ENCODE measurements at regions of chr6 and their contacts with region 1.

Region 1: DNA sequence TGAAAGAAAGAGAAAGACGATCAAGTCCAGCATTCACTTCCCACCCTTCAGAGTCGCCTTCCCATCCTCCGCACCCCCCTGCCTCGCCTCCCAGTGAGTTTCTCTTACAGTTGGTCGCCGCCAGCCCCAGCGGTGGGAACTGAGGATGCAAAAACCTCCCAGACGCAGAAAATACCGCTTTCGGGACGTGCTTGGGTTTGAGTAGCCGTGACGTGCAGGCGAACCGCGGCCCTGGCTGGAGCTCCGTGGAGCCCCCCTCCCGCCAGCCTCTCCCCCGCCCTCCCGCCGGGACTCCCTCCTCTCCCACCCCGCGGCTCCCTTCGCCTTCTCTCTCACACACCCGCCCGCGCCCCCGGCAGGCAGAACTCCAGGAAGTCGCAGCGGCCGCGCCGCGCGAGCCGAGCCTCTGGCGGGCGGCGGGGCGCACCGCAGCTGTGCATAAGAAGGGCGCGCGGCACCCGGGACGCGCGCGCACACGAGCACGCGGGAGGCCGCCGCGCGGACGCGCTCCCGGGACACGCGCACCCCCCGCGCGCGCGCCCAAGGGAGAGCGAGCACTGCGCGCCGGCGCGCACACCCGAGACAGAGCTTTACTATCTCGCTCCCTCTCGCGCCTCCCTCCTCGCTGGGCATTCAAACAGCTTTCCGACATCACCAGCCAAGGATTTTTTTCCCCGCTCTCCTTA is at the start of gene ADGRB3:
- DNase-seq: peak; percentile 95
- H3K4me3 ChIP-seq: peak within 1 kb of the TSS; percentile 88
- H3K27ac ChIP-seq: peak within 1 kb of the TSS; percentile 84
- H3K4me1 ChIP-seq: peaks cover 39% of the 10 kb centered on the region
- H3K27me3 ChIP-seq: no peaks in the 10 kb centered on the region
- CTCF ChIP-seq: no peak
- total RNA-seq, gene ADGRB3: 7.7 and 8.1 TPM in 2 replicates

Region 2: GRCh38 chr6:68238097-68238601 is 396.7 kb before region 1 on chr6:
- CTCF ChIA-PET with region 1: no interaction called
- POLR2A ChIA-PET with region 1: no interaction called
- intact Hi-C with region 1: loop called (anchors 10 kb)
- DNase-seq: peak; percentile 71
- H3K4me3 ChIP-seq: no peak overlapping the region
- H3K27ac ChIP-seq: peak overlapping the region; percentile 21
- H3K4me1 ChIP-seq: peaks cover 20% of the 10 kb centered on the region
- H3K27me3 ChIP-seq: no peaks in the 10 kb centered on the region
- CTCF ChIP-seq: no peak

Region 3: GRCh38 chr6:68296126-68296525 is 338.7 kb before region 1 on chr6:
- CTCF ChIA-PET with region 1: no interaction called
- POLR2A ChIA-PET with region 1: no interaction called
- intact Hi-C with region 1: no loop called
- DNase-seq: no peak
- H3K4me3 ChIP-seq: no peak overlapping the region
- H3K27ac ChIP-seq: no peak overlapping the region
- H3K4me1 ChIP-seq: no peaks in the 10 kb centered on the region
- H3K27me3 ChIP-seq: no peaks in the 10 kb centered on the region
- CTCF ChIP-seq: no peak

Region 4: DNA sequence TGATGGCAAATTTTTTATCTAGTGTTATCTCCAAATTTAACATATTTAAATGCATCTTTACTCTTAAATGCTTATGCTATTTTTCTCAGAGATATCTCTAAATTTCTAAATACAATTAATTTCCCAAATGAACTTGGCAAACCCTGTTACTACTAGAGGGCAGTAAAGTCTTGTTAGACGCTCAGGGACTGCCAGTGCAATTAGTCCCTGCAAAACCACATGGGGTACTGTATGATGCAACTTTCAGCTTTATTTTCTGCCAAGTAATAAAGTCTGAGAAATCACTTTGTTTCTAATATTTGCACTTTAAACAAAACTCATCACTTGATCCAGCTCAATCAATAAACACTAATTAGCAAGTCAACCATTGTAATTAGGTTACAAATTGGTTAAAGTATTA is 75.8 kb before region 1 on chr6:
- CTCF ChIA-PET with region 1: interaction called, 10 read pairs
- POLR2A ChIA-PET with region 1: no interaction called
- intact Hi-C with region 1: loop called (anchors 1 kb)
- DNase-seq: peak; percentile 79
- H3K4me3 ChIP-seq: peak overlapping the region; percentile 38
- H3K27ac ChIP-seq: peak overlapping the region; percentile 87
- H3K4me1 ChIP-seq: peaks cover 23% of the 10 kb centered on the region
- H3K27me3 ChIP-seq: no peaks in the 10 kb centered on the region
- CTCF ChIP-seq: peak; percentile 69; the same call in 1 of the 2 replicates

Region 5: DNA sequence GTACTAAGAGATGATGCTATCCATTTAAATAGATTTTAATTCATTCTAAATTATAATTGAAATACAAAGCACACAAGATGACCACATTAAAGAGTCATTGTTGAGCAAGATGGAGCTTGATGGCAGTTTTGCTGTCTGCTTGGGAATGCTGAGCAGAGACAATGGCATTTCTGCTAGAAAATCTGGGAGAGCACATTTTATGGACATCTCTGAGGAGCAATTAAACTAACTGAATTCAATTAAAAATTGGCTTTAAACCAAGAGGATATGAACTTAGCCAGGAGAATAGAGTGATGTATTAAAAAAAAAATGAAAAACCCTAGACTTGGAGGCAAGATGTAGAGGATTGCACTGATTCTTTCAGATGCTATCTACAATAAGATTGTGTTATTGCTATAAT is 18.9 kb before region 1 on chr6:
- CTCF ChIA-PET with region 1: no interaction called
- POLR2A ChIA-PET with region 1: no interaction called
- intact Hi-C with region 1: no loop called
- DNase-seq: no peak
- H3K4me3 ChIP-seq: no peak overlapping the region
- H3K27ac ChIP-seq: no peak overlapping the region
- H3K4me1 ChIP-seq: no peaks in the 10 kb centered on the region
- H3K27me3 ChIP-seq: no peaks in the 10 kb centered on the region
- CTCF ChIP-seq: no peak

Region 6: GRCh38 chr6:68728159-68728979 is 93.5 kb after region 1 on chr6:
- CTCF ChIA-PET with region 1: no interaction called
- POLR2A ChIA-PET with region 1: no interaction called
- intact Hi-C with region 1: loop called (anchors 5 kb)
- DNase-seq: peak; percentile 30
- H3K4me3 ChIP-seq: no peak overlapping the region
- H3K27ac ChIP-seq: peak overlapping the region; percentile 56
- H3K4me1 ChIP-seq: peaks cover 59% of the 10 kb centered on the region
- H3K27me3 ChIP-seq: no peaks in the 10 kb centered on the region
- CTCF ChIP-seq: no peak

Region 7: GRCh38 chr6:68876792-68877493 is 242.1 kb after region 1 on chr6:
- CTCF ChIA-PET with region 1: no interaction called
- POLR2A ChIA-PET with region 1: no interaction called
- intact Hi-C with region 1: loop called (anchors 2 kb)
- DNase-seq: peak; percentile 61
- H3K4me3 ChIP-seq: no peak overlapping the region
- H3K27ac ChIP-seq: peak overlapping the region; percentile 56
- H3K4me1 ChIP-seq: peaks cover 59% of the 10 kb centered on the region
- H3K27me3 ChIP-seq: no peaks in the 10 kb centered on the region
- CTCF ChIP-seq: peak; percentile 59

Region 8: GRCh38 chr6:69732640-69733039 is 1097.8 kb after region 1 on chr6:
- CTCF ChIA-PET with region 1: no interaction called
- POLR2A ChIA-PET with region 1: no interaction called
- intact Hi-C with region 1: loop called (anchors 5 kb)
- DNase-seq: peak; percentile 45
- H3K4me3 ChIP-seq: no peak overlapping the region
- H3K27ac ChIP-seq: no peak overlapping the region
- H3K4me1 ChIP-seq: no peaks in the 10 kb centered on the region
- H3K27me3 ChIP-seq: no peaks in the 10 kb centered on the region
- CTCF ChIP-seq: peak; percentile 59

Region 9: GRCh38 chr6:69780585-69781178 is 1145.8 kb after region 1 on chr6:
- CTCF ChIA-PET with region 1: no interaction called
- POLR2A ChIA-PET with region 1: no interaction called
- intact Hi-C with region 1: no loop called
- DNase-seq: no peak
- H3K4me3 ChIP-seq: no peak overlapping the region
- H3K27ac ChIP-seq: no peak overlapping the region
- H3K4me1 ChIP-seq: peaks cover 31% of the 10 kb centered on the region
- H3K27me3 ChIP-seq: no peaks in the 10 kb centered on the region
- CTCF ChIP-seq: no peak

Region 10: DNA sequence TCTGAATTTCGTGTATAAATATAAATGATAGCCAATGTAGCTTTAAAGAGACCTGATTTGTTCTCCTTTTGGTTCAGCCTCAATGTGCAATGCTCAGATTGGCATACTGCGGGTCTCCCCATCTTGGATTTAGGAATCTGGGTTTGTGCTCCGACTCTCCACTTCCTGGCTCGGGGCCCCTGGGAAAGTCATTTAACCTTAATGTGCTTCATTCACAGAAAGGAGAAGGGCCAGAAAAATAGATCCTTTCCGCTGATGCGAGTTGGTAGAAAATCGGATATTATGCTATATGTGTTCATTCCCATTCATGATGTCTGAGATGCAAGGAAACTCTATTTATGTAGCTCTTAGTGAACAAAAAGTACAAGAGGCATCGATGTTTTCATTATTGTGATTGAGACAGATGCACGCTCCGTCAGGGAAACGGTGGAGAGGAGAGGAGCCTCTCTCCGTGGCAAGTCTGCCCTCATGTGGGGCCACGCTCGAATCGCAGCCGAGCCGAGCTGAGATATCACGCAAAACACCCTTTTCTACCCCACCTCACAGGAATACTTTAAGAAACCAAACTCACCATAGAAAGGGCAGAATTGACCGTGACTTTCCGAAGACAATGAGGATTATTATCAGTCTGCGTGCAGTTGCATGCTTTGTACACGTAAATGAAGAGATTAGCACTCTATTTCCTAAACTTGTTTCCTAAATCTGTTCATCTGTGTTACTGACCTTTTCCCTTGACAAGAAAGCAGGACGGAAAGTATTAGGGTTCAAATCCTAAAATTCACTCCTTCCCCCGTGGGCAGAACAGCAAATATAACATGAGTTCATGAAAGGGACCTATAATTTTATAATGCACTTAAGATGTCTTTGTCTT is 1531.5 kb after region 1 on chr6:
- CTCF ChIA-PET with region 1: no interaction called
- POLR2A ChIA-PET with region 1: no interaction called
- intact Hi-C with region 1: loop called (anchors 5 kb)
- DNase-seq: peak; percentile 83
- H3K4me3 ChIP-seq: peak overlapping the region; percentile 36
- H3K27ac ChIP-seq: no peak overlapping the region
- H3K4me1 ChIP-seq: peaks cover 34% of the 10 kb centered on the region
- H3K27me3 ChIP-seq: no peaks in the 10 kb centered on the region
- CTCF ChIP-seq: peak; percentile 84

Measured in A673 (cell line).